ENCODE measurements at regions of chr12 and their contacts with region 1.

Region 1: GRCh38 chr12:52372216-52373154 is 5.2 kb upstream of the KRT85 start:
- DNase-seq: peak; percentile 94
- H3K4me3 ChIP-seq: no peak overlapping the region
- H3K27ac ChIP-seq: peak overlapping the region in 3 of 4 donors; percentile 31 to 66 (median 45)
- H3K4me1 ChIP-seq: peaks cover 0 to 18% (median 13%) of the 10 kb centered on the region in 4 donors
- H3K27me3 ChIP-seq: peaks cover 0 to 1% (median 0%) of the 10 kb centered on the region in 4 donors
- CTCF ChIP-seq: peak; percentile 64 to 84 (median 75)
- EP300 ChIP-seq: no peak
- POLR2A ChIP-seq: no peak

Region 2: DNA sequence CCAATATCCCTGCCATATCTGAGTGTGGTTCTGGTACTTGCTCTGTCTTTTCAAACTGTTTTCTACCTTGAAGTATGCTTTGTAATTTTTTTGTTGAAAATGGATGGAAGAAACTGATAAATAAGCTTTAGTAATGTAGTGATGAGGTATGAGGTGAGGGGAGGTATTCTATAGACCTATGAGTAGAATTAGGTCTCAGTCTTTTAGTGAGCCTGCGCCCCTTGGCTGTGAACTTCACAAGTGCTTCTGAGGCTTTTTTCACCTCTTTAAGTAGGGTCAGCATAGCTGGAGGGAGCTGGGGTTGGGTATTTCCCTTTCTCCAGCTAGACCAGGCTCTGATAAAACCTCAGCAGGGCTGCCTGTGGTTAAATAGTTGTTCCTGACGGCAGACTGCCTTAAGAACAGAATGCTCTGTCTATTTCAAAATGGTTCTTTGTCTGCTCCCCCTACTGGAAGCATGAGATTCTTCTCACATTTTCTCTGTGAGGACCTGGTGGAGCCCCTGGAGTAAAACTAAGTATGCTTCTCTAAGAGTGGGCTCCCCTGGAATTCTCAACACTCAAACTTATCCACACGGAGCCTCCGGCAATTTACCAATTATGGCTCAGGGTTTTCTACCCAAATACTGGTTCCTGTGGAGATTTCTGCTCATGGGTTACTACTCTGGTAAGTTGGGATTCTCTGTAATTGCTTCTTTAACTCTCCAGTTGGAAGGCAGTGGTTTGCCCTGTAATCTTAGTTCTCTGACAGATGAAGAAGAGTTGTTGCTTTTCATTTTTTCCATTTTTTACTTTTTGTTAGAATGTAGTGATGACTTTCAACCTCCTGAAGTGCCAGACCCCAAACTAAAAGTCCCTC is 134.6 kb after region 1 on chr12:
- intact Hi-C with region 1: loop called (anchors 5 kb)
- DNase-seq: peak; percentile 81
- H3K4me3 ChIP-seq: no peak overlapping the region
- H3K27ac ChIP-seq: no peak overlapping the region
- H3K4me1 ChIP-seq: no peaks in the 10 kb centered on the region
- H3K27me3 ChIP-seq: peaks cover 0 to 20% (median 0%) of the 10 kb centered on the region in 4 donors
- CTCF ChIP-seq: peak; percentile 43 to 56 (median 47)
- EP300 ChIP-seq: no peak
- POLR2A ChIP-seq: no peak

Region 3: DNA sequence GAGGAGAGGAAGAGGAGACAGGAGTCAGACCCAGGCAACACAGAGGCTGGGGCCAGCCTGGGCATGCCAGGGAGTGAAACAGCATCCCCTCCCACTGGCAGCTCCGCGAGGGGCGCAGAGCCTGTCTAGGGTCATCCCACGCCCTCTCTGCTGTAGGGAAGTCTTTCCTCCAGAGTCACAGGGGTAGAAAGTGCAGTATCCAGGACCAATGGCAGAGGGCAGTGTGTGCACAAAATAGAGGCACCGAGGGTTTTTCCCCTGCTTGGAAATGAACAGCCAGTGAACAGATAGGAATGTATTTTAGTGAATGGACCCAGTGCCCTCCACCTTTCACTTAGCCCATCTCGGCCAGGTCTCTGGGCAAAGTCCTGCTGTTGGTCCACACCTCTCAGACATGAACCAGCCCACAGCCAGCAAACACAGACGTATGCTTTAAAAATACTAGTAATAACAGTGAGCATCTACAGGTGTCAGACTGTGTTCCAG is 210.5 kb after region 1 on chr12:
- intact Hi-C with region 1: loop called (anchors 10 kb)
- DNase-seq: no peak
- H3K4me3 ChIP-seq: no peak overlapping the region
- H3K27ac ChIP-seq: no peak overlapping the region
- H3K4me1 ChIP-seq: no peaks in the 10 kb centered on the region
- H3K27me3 ChIP-seq: peaks cover 0 to 7% (median 0%) of the 10 kb centered on the region in 4 donors
- CTCF ChIP-seq: peak; percentile 71 to 84 (median 71)
- EP300 ChIP-seq: no peak
- POLR2A ChIP-seq: no peak

Region 4: DNA sequence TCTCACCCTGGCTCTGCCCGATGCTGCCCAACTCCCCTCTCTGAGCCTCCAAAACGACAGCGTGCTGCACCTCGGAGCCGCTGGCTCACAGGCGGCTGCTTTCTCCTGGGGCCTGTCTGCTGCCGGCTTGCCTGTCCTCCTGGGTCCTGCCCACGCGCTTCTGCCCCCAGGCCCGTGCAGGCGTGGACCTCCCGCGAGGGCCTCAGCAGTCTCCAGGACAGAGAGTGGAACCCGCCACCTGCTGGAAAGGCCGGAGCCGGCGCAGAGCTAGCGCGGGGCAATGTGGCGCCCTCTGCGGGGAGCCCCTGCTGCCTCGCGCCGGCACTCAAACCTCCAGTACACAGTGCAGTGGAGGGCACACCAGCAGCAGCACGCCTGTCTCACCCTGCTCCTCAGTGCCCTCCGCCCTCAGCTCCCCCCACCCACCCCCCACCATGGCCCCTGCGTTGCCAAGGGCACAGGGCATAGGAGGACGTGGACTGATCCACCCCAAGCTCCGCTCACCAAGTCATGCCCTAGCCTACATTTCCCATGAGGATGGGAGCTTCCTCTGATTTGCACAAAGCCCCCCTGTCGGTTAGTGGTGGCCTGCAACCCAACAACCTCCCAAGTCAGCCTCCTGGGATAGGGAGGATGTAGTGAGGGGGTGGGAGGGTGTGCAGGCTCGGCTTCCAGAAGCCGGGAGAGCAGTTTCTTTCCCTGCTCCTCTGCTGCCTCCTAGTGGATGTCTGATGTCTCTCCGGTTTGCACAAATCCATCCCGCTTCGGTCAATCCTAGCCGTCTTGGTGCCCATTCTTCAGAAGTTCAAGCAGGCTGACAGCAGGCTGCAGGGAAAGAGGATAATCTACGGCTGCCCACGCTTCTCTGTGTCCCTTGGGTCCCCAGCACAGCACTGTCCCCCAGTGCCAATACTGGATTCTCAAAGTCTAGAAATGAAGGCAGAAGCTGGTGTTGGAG is 507.2 kb after region 1 on chr12:
- intact Hi-C with region 1: loop called (anchors 5 kb)
- DNase-seq: no peak
- H3K4me3 ChIP-seq: peak overlapping the region; percentile 40 to 53 (median 42)
- H3K27ac ChIP-seq: peak overlapping the region in 3 of 4 donors; percentile 14 to 34 (median 17)
- H3K4me1 ChIP-seq: peaks cover 10 to 25% (median 20%) of the 10 kb centered on the region in 4 donors
- H3K27me3 ChIP-seq: peaks cover 0 to 16% (median 0%) of the 10 kb centered on the region in 4 donors
- CTCF ChIP-seq: peak; percentile 60 to 81 (median 67)
- EP300 ChIP-seq: no peak
- POLR2A ChIP-seq: no peak

Region 5: GRCh38 chr12:52980693-52981423 is 608.4 kb after region 1 on chr12:
- intact Hi-C with region 1: loop called (anchors 10 kb)
- DNase-seq: peak; percentile 96
- H3K4me3 ChIP-seq: no peak overlapping the region
- H3K27ac ChIP-seq: no peak overlapping the region
- H3K4me1 ChIP-seq: peaks cover 0 to 25% (median 7%) of the 10 kb centered on the region in 4 donors
- H3K27me3 ChIP-seq: peaks cover 0 to 10% (median 0%) of the 10 kb centered on the region in 4 donors
- CTCF ChIP-seq: peak; percentile 95 to 99 (median 95)
- EP300 ChIP-seq: no peak
- POLR2A ChIP-seq: no peak